PC-3 (cell line): ENCODE measurements at regions of chr2 and their contacts with region 1.

Region 1: DNA sequence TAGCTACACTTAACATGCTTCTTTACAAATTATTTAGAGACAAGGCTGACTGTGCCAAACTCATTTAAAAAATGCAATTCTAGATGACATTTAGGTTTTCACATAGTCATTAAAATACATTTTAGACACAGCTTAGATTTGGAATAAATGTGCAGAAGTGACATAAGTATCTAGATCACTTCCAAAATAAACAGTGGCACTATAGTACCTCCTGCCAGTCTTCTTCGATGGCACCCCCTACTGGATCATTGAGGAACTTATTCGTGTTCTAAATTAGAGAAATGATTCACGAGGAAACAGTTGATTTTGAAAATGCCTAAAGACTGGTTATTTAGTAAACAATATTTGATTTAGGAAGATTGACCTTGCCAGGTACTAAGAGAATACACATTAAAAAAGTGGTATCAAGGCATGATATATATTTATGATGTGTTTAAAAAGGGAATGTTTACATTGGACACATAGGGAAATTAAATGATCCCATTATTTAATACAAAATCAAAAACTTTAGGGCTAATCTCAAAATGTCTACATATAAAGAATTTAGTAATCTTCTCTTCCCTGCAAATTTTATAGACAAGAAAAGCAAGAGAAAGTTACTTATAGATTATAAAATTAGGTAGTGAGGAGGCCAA is 323.9 kb downstream of the XIRP2 start:
- DNase-seq: peak; percentile 90
- ATAC-seq: peak; percentile 72
- H3K4me3 ChIP-seq: no peak overlapping the region
- H3K27ac ChIP-seq: no peak overlapping the region
- H3K4me1 ChIP-seq: 0 out of 2 replicates have a peak, but pooled peaks cover 5% of the 10 kb centered on the region
- H3K27me3 ChIP-seq: no peaks in the 10 kb centered on the region
- CTCF ChIP-seq: peak; percentile 91

Region 2: DNA sequence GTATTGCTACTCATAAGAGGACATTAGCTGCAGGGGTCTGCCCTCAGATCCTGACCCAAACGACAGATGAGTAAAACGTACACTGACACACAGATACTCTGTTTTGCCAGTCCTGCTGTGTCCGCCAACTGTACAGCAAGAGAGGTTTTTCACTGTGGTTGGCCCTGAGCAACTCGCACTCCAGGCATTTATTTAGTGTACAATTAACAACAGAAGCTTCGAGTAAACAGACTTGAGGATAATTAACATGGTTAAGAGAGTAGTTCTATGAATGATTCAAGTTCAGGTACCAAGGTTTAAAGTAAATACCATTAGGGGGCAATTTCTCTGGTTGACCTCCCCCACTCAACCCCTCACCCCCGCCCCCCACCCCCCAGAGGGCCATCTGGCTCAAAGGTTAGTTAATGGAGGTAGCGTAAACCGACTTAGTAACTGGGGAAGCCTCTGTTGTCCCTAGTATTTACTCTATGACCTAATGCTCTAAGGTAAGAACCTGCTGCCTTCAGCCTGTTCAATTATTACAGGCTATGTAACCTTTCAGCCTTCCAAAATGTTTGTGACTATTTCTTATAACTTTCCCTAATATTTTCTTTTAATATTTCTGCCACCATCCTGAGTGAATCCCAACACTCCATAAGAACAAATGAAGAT is 427.7 kb before region 1 on chr2:
- CTCF ChIA-PET with region 1: no interaction called
- POLR2A ChIA-PET with region 1: no interaction called
- intact Hi-C with region 1: no loop called
- DNase-seq: no peak
- ATAC-seq: no peak
- H3K4me3 ChIP-seq: no peak overlapping the region
- H3K27ac ChIP-seq: no peak overlapping the region
- H3K4me1 ChIP-seq: no peaks in the 10 kb centered on the region; the same call in 1 of the 2 replicates
- H3K27me3 ChIP-seq: no peaks in the 10 kb centered on the region
- CTCF ChIP-seq: no peak

Region 3: GRCh38 chr2:167127135-167127534 is 85.0 kb before region 1 on chr2:
- CTCF ChIA-PET with region 1: interaction called, 4 read pairs
- POLR2A ChIA-PET with region 1: no interaction called
- intact Hi-C with region 1: loop called (anchors 1 kb)
- DNase-seq: peak; percentile 70
- ATAC-seq: peak; percentile 95
- H3K4me3 ChIP-seq: no peak overlapping the region
- H3K27ac ChIP-seq: no peak overlapping the region
- H3K4me1 ChIP-seq: peaks cover 3% of the 10 kb centered on the region; the same call in 1 of the 2 replicates
- H3K27me3 ChIP-seq: no peaks in the 10 kb centered on the region
- CTCF ChIP-seq: peak; percentile 68

Region 4: DNA sequence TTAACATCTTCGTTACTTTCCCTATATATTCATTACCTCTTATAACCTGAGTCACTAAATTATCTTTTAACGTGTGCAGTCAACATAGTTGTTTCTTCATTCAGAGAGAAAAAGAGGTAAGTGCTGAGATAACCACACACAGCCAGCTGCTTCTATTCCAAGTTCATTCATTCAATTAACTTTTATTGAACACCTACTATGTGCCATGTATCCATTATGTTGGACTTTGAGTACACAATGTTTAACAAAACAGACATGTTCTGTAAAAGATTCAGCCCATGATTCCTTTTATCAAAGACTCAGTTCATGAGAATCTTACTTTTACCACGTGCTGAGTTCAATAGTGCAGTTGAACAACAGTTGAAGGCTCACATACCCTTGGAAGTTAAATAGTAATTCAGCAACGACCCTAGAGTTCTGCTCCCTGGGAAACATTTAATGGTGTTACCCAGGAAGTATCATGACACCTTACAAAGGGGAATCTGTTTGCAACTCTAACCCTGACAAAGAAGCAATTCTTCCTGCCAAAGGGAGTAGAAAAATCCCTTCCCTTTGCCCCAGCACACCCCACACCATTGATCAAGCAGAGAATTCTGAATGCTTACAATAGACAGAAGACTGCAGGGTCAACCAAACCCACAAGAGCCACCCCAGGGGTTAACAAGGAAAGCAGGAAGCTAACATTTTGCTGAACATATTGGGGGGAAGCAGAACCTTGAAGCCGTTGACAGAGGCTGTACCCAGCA is 439.4 kb after region 1 on chr2:
- CTCF ChIA-PET with region 1: no interaction called
- POLR2A ChIA-PET with region 1: no interaction called
- intact Hi-C with region 1: no loop called
- DNase-seq: no peak
- ATAC-seq: no peak
- H3K4me3 ChIP-seq: no peak overlapping the region
- H3K27ac ChIP-seq: no peak overlapping the region
- H3K4me1 ChIP-seq: no peaks in the 10 kb centered on the region
- H3K27me3 ChIP-seq: no peaks in the 10 kb centered on the region
- CTCF ChIP-seq: no peak